Activated B cell treated with CpG ODN at 0.5 μM for 24 hours (primary cell): ENCODE measurements at regions of chr10 and their contacts with region 1.

Region 1: DNA sequence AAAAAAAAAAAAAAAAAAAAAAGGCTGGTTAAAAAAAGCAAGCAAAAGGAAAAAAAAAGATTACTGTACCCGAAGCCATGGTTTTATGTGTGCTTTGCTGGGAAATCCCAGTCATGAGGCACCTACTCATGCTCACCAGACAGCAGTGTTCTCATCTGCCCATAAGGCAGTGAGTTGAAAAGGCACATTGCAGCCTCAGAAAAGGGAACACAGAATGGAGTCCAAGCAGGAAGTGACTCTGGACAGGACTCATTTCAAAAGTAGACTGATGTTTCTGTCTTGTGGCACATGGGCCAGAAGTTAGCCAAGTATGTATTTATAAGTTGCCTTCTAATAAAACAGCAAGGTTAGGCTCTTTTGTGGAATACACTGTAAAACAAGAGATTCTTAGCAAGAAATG is 40.2 kb downstream of the PDSS1 start:
- DNase-seq: no peak
- ATAC-seq: peak; percentile 84
- H3K4me3 Mint-ChIP-seq: peak overlapping the region; percentile 63
- H3K27ac Mint-ChIP-seq: peak overlapping the region; percentile 95
- H3K4me1 Mint-ChIP-seq: peaks cover 67% of the 10 kb centered on the region
- H3K27me3 Mint-ChIP-seq: no peaks in the 10 kb centered on the region
- CTCF ChIP-seq: no peak

Region 2: GRCh38 chr10:26481914-26482550 is 255.7 kb before region 1 on chr10:
- CTCF ChIA-PET with region 1: no interaction called
- POLR2A ChIA-PET with region 1: no interaction called
- intact Hi-C with region 1: loop called (anchors 5 kb)
- DNase-seq: no peak
- ATAC-seq: peak; percentile 79
- H3K4me3 Mint-ChIP-seq: peak overlapping the region; percentile 46
- H3K27ac Mint-ChIP-seq: peak overlapping the region; percentile 83
- H3K4me1 Mint-ChIP-seq: peaks cover 82% of the 10 kb centered on the region
- H3K27me3 Mint-ChIP-seq: no peaks in the 10 kb centered on the region
- CTCF ChIP-seq: no peak

Region 3: GRCh38 chr10:26755443-26755903 is 17.7 kb after region 1 on chr10:
- CTCF ChIA-PET with region 1: interaction called, 3 read pairs
- POLR2A ChIA-PET with region 1: interaction called, 4 read pairs
- intact Hi-C with region 1: loop called (anchors 2 kb)
- DNase-seq: no peak
- ATAC-seq: peak; percentile 75
- H3K4me3 Mint-ChIP-seq: peak overlapping the region; percentile 59
- H3K27ac Mint-ChIP-seq: peak overlapping the region; percentile 68
- H3K4me1 Mint-ChIP-seq: peaks cover 25% of the 10 kb centered on the region
- H3K27me3 Mint-ChIP-seq: no peaks in the 10 kb centered on the region
- CTCF ChIP-seq: no peak

Region 4: DNA sequence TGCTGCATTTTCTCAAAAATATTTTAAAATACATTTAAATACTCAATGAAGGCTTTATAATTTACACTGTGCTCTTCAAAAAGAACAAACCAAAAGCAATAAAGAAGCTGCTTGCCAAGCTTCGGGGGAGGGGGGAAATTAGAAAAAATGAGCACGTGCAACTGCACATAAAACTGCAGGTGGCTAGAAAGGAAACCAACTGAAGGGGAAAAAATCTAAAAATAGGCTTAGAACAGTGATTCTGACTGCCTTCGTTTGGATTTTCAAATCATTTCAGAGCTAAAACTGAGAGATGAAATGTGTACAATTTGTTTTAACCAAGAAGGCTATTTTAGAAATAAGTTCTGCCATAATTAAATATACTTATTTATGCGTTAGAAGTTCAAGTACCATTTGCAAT is 61.6 kb after region 1 on chr10:
- CTCF ChIA-PET with region 1: no interaction called
- POLR2A ChIA-PET with region 1: no interaction called
- intact Hi-C with region 1: loop called (anchors 2 kb)
- DNase-seq: no peak
- ATAC-seq: peak; percentile 51
- H3K4me3 Mint-ChIP-seq: peak overlapping the region; percentile 65
- H3K27ac Mint-ChIP-seq: peak overlapping the region; percentile 80
- H3K4me1 Mint-ChIP-seq: peaks cover 89% of the 10 kb centered on the region
- H3K27me3 Mint-ChIP-seq: no peaks in the 10 kb centered on the region
- CTCF ChIP-seq: no peak

Region 5: GRCh38 chr10:27155066-27155754 is 417.5 kb after region 1 on chr10 and contains the start of gene MASTL:
- CTCF ChIA-PET with region 1: no interaction called
- POLR2A ChIA-PET with region 1: interaction called, 3 read pairs
- intact Hi-C with region 1: loop called (anchors 1 kb)
- DNase-seq: peak; percentile 97
- ATAC-seq: peak; percentile 84
- H3K4me3 Mint-ChIP-seq: peak within 1 kb of the TSS; percentile 100
- H3K27ac Mint-ChIP-seq: peak within 1 kb of the TSS; percentile 100
- H3K4me1 Mint-ChIP-seq: peaks cover 44% of the 10 kb centered on the region
- H3K27me3 Mint-ChIP-seq: no peaks in the 10 kb centered on the region
- CTCF ChIP-seq: no peak
- total RNA-seq, gene MASTL: 11.2 and 12.4 TPM in 2 replicates